ENCODE measurements at regions of chr16 and their contacts with region 1.

Region 1: GRCh38 chr16:62225697-62226280 is 189.6 kb upstream of the CDH8 start:
- DNase-seq: peak; percentile 94
- ATAC-seq: peak; percentile 100
- H3K4me3 Mint-ChIP-seq: no peak overlapping the region
- H3K27ac Mint-ChIP-seq: no peak overlapping the region
- H3K4me1 Mint-ChIP-seq: peaks cover 11% of the 10 kb centered on the region
- H3K27me3 Mint-ChIP-seq: no peaks in the 10 kb centered on the region
- CTCF ChIP-seq: peak; percentile 77

Region 2: GRCh38 chr16:62068747-62069146 is 157.0 kb before region 1 on chr16:
- CTCF ChIA-PET with region 1: no interaction called
- POLR2A ChIA-PET with region 1: no interaction called
- DNase-seq: no peak
- ATAC-seq: peak; percentile 89
- H3K4me3 Mint-ChIP-seq: no peak overlapping the region
- H3K27ac Mint-ChIP-seq: no peak overlapping the region
- H3K4me1 Mint-ChIP-seq: peaks cover 8% of the 10 kb centered on the region
- H3K27me3 Mint-ChIP-seq: no peaks in the 10 kb centered on the region
- CTCF ChIP-seq: peak; percentile 37; the same call in 1 of the 2 replicates

Region 3: GRCh38 chr16:62205459-62205858 is 20.3 kb before region 1 on chr16:
- CTCF ChIA-PET with region 1: interaction called, 14 read pairs
- POLR2A ChIA-PET with region 1: no interaction called
- DNase-seq: no peak
- ATAC-seq: no peak
- H3K4me3 Mint-ChIP-seq: no peak overlapping the region
- H3K27ac Mint-ChIP-seq: no peak overlapping the region
- H3K4me1 Mint-ChIP-seq: no peaks in the 10 kb centered on the region
- H3K27me3 Mint-ChIP-seq: no peaks in the 10 kb centered on the region
- CTCF ChIP-seq: no peak

Region 4: DNA sequence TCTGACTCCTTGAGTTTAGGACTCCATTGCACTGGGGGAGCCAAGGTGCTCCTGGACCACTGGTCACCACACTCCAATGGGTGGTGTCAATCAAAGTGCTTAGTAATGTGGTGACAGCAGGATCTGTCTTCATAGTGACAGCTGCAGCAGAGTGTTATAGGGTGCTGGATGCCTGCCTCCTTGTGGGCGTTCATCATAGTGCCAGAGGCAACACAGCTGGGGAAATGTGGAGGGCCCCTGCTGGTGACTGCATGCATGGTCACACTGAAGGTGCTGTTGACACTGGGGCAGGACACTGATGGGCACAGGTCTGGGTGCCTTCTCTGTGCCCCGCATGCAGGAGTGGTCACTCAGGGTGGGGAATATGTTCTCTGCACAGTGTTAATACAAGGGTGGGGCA is 12.0 kb before region 1 on chr16:
- CTCF ChIA-PET with region 1: interaction called, 18 read pairs
- POLR2A ChIA-PET with region 1: no interaction called
- DNase-seq: peak; percentile 76
- ATAC-seq: peak; percentile 100
- H3K4me3 Mint-ChIP-seq: no peak overlapping the region
- H3K27ac Mint-ChIP-seq: no peak overlapping the region
- H3K4me1 Mint-ChIP-seq: peaks cover 9% of the 10 kb centered on the region
- H3K27me3 Mint-ChIP-seq: no peaks in the 10 kb centered on the region
- CTCF ChIP-seq: peak; percentile 71

Region 5: GRCh38 chr16:62256406-62256805 is 30.6 kb after region 1 on chr16:
- CTCF ChIA-PET with region 1: interaction called, 16 read pairs
- POLR2A ChIA-PET with region 1: no interaction called
- DNase-seq: no peak
- ATAC-seq: peak; percentile 89
- H3K4me3 Mint-ChIP-seq: no peak overlapping the region
- H3K27ac Mint-ChIP-seq: no peak overlapping the region
- H3K4me1 Mint-ChIP-seq: peaks cover 37% of the 10 kb centered on the region
- H3K27me3 Mint-ChIP-seq: peaks cover 7% of the 10 kb centered on the region
- CTCF ChIP-seq: peak; percentile 51; the same call in 1 of the 2 replicates

Region 6: GRCh38 chr16:62342216-62342615 is 116.4 kb after region 1 on chr16:
- CTCF ChIA-PET with region 1: no interaction called
- POLR2A ChIA-PET with region 1: no interaction called
- DNase-seq: no peak
- ATAC-seq: no peak
- H3K4me3 Mint-ChIP-seq: no peak overlapping the region
- H3K27ac Mint-ChIP-seq: no peak overlapping the region
- H3K4me1 Mint-ChIP-seq: no peaks in the 10 kb centered on the region
- H3K27me3 Mint-ChIP-seq: no peaks in the 10 kb centered on the region
- CTCF ChIP-seq: no peak

Region 7: DNA sequence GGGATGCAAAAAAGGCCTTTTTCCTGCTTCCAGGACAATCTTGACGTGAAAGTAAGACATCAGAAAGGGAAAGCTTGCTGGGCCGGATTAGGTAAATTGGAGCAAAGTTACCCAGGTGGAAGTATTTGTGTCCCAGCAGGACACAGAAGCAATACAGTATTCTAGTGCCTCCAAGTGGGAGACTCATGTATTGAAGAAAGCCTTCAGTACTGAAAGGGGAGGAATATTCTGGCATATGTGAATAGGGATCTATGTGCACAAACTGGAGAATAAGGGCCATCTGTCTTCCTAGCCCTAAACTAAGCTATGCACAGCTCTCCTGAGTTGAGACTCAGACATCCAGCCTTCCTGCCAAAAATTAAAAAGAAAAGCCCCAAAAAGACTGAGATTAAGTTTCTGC is 137.7 kb after region 1 on chr16:
- CTCF ChIA-PET with region 1: interaction called, 10 read pairs
- POLR2A ChIA-PET with region 1: no interaction called
- DNase-seq: no peak
- ATAC-seq: peak; percentile 97
- H3K4me3 Mint-ChIP-seq: no peak overlapping the region
- H3K27ac Mint-ChIP-seq: no peak overlapping the region; the same call in 1 of the 2 replicates
- H3K4me1 Mint-ChIP-seq: peaks cover 20% of the 10 kb centered on the region
- H3K27me3 Mint-ChIP-seq: no peaks in the 10 kb centered on the region
- CTCF ChIP-seq: 0 out of 2 replicates have a peak, but pooled peaks have one; percentile 24

Region 8: DNA sequence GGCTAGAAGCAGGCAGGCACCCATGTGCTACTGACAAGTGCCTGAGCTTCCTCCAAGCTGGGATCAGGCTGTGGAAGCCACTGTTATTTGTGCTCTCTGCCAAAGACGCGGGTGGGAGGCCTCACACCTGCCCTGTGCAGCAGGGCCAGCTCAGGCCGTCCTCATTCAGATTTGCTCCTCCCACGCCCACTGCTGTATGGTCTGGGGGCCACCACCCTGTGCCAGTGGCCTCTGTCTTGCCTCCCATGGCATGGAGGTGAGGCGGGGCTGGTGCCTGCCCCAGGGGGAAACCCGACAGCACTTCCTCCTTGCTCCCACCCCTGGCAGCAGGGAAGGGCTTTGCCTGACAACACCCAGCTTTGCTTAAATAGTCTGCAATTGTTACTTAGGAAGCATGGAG is 166.9 kb after region 1 on chr16:
- CTCF ChIA-PET with region 1: no interaction called
- POLR2A ChIA-PET with region 1: no interaction called
- DNase-seq: peak; percentile 11
- ATAC-seq: peak; percentile 58
- H3K4me3 Mint-ChIP-seq: no peak overlapping the region
- H3K27ac Mint-ChIP-seq: no peak overlapping the region
- H3K4me1 Mint-ChIP-seq: no peaks in the 10 kb centered on the region
- H3K27me3 Mint-ChIP-seq: no peaks in the 10 kb centered on the region
- CTCF ChIP-seq: no peak

Measured in WTC11 (cell line).